K562 (cell line): ENCODE measurements at regions of chr21 and their contacts with region 1.

Region 1: DNA sequence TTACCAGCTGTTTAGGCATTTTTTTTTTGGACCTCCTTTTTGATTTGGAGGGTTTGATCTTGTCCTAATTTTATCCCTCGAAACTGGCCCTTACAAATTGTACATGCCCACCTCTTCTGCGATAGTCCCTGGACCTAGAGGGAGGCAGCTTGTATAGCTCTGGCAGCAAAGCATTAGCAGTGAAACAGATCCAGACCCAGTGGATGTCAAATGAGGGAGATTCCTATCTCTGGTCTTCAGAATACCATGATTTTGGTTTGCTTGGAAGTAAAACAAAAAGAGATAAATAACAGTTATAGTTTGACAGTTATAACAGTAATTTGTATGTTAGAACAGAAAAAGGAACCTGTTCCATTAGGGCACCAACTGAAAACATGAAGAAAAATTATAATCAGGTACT is 123.6 kb downstream of the MIS18A start:
- DNase-seq: no peak
- ATAC-seq: no peak
- H3K4me3 ChIP-seq: no peak overlapping the region
- H3K27ac ChIP-seq: no peak overlapping the region
- H3K4me1 ChIP-seq: no peaks in the 10 kb centered on the region
- H3K27me3 ChIP-seq: peaks cover 0 to 3% of the 10 kb centered on the region in 2 experiments; a peak in 2 of 5 replicates
- CTCF ChIP-seq: no peak
- EP300 ChIP-seq: no peak
- POLR2A ChIP-seq: no peak
- RAD21 ChIP-seq: no peak

Region 2: DNA sequence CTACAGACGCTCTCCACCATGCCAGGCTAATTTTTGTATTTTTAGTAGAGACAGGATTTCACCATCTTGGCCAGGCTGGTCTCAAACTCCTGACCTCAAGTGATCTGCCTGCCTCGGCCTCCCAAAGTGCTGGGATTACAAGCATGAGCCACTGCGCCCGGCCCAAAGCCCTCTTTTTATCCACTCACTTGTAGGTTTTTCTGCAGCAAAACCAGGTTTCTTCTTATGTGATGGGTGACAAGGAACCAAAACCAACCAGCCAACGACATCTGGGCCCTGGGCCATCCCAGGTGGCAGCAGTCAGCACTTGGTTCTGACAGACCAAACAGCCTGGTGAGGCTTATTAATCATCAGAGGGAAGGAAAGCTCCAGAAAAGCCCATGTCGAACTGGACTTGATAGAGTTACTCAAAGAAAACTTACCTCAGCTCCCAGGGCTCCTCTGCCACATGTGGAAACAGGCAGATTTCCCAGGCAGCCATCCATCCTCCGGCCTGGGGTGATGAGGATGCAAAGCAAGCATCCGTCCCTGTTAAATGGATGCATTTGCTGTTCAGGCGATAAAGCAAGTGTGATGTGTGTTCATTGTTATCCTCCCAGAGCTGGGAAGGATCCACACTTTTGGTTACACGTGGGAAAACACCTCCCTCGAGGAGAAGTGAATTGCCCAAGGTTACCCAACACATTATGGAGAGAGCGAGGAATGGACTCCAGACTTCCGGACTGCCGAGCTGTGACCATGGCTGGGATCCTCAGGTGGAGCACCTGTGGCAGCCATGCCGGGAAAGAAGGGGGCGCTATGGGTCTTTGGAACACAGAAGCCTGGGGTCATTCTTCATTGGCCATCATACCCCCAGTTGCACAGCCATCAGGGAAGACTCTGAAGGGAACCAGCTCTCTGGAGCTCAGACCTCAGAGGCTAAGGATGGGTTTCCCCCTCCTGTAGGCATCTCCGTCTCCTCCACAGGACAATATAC is 163.6 kb before region 1 on chr21:
- CTCF ChIA-PET with region 1: no interaction called
- POLR2A ChIA-PET with region 1: no interaction called
- in situ Hi-C with region 1: no loop called
- intact Hi-C with region 1: loop called (anchors 5 kb)
- DNase-seq: peak in 1 of 4 experiments; percentile 26
- ATAC-seq: peak; percentile 77
- H3K4me3 ChIP-seq: no peak overlapping the region
- H3K27ac ChIP-seq: no peak overlapping the region
- H3K4me1 ChIP-seq: no peaks in the 10 kb centered on the region
- H3K27me3 ChIP-seq: peaks cover 23 to 47% of the 10 kb centered on the region in 2 experiments
- CTCF ChIP-seq: peak; percentile 45 to 58 (median 53); a peak in 5 of 6 replicates
- EP300 ChIP-seq: no peak
- POLR2A ChIP-seq: no peak
- RAD21 ChIP-seq: peak; percentile 22 to 58; a peak in 3 of 4 replicates

Region 3: GRCh38 chr21:32329331-32329730 is 174.1 kb after region 1 on chr21:
- CTCF ChIA-PET with region 1: no interaction called
- POLR2A ChIA-PET with region 1: no interaction called
- in situ Hi-C with region 1: no loop called
- intact Hi-C with region 1: no loop called
- DNase-seq: no peak
- ATAC-seq: no peak; the same call in 2 of the 3 replicates
- H3K4me3 ChIP-seq: no peak overlapping the region
- H3K27ac ChIP-seq: no peak overlapping the region
- H3K4me1 ChIP-seq: peaks cover 0 to 2% of the 10 kb centered on the region in 2 experiments; a peak in 1 of 5 replicates
- H3K27me3 ChIP-seq: no peaks in the 10 kb centered on the region
- CTCF ChIP-seq: no peak
- EP300 ChIP-seq: no peak
- POLR2A ChIP-seq: no peak
- RAD21 ChIP-seq: no peak

Region 4: DNA sequence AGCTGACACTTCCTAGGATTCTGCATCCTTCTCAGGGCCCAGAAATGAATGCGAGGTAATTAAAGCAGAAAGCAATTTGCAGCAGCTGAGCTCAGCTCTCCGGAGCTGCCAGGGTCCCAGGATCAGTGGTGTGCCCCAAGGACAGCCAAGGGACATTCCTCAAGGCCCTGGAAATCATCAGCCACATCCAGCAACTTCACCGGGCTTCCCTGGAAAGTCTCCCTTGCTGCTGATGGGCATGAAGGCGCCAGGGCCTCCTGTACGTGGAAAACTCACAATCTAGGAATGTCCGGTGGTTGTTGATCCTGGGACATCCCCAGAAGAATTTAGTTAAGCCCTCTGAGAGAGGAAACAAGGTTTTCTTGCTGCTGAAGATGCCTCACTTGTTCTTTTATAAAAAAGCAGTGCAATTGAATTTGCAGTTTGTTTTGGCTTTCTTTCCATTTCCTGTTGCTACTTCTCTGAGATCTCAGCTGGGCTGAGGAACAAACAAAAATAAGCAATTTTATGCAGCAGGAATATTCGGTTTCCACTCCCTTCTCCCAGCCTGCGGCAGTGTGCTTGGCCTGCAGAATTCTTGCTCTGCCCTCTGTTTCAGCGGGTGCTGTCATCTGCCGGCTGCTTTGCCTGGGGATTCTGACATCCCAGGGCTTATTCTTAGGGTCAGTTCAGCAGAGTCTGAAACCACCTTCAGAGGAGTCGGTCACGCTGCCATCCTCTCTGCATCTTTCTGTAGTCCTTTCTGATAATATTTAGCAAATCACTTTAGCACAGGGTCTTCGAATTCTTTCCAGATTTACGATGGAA is 344.2 kb after region 1 on chr21:
- CTCF ChIA-PET with region 1: no interaction called
- POLR2A ChIA-PET with region 1: no interaction called
- in situ Hi-C with region 1: no loop called
- intact Hi-C with region 1: no loop called
- DNase-seq: no peak
- ATAC-seq: no peak
- H3K4me3 ChIP-seq: no peak overlapping the region
- H3K27ac ChIP-seq: no peak overlapping the region
- H3K4me1 ChIP-seq: peaks cover 0 to 5% of the 10 kb centered on the region in 2 experiments; a peak in 1 of 5 replicates
- H3K27me3 ChIP-seq: peaks cover 30 to 31% of the 10 kb centered on the region in 2 experiments
- CTCF ChIP-seq: no peak
- EP300 ChIP-seq: no peak
- POLR2A ChIP-seq: no peak
- RAD21 ChIP-seq: no peak